H1 (cell line): ENCODE measurements at regions of chr12 and their contacts with region 1.

Region 1: DNA sequence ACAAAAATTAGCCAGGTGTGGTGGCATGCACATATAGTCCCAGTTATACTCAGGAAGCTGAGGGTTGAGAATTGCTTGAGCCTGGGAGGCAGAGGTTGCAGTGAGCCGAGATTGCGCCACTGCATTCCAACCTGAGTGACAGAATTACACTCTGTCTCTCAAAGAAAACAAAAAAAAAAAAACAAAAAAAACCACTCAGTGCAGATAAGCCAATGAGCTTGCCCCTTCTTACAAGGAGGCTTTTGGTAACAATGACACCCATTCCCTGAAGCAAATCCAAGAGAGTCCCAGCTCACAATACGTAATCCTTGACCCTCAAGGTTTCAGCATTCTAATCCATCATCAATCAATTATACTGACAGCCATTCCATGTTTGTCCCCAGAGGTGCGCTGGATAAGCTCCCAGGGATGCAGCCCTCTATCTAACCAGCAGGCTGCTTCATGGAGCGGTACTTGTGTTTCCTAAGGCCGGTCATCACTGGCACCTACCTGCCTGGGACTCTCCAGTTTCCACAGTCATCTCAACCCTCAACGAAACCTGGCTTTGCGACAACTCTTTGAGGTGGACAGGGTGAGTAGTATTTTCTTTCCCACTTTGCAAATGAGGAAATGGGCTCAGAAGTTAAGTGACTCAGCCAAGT is 12.4 kb downstream of the GCN1 start:
- DNase-seq: no peak
- H3K4me3 ChIP-seq: no peak overlapping the region
- H3K27ac ChIP-seq: no peak overlapping the region
- H3K4me1 ChIP-seq: no peaks in the 10 kb centered on the region
- H3K27me3 ChIP-seq: no peaks in the 10 kb centered on the region
- CTCF ChIP-seq: no peak
- EP300 ChIP-seq: no peak
- POLR2A ChIP-seq: no peak
- RAD21 ChIP-seq: no peak

Region 2: GRCh38 chr12:120159509-120160237 is 22.4 kb before region 1 on chr12:
- CTCF ChIA-PET with region 1: no interaction called
- POLR2A ChIA-PET with region 1: interaction called, 358 read pairs
- DNase-seq: no peak
- H3K4me3 ChIP-seq: no peak overlapping the region
- H3K27ac ChIP-seq: no peak overlapping the region
- H3K4me1 ChIP-seq: no peaks in the 10 kb centered on the region
- H3K27me3 ChIP-seq: no peaks in the 10 kb centered on the region
- CTCF ChIP-seq: no peak
- EP300 ChIP-seq: no peak
- POLR2A ChIP-seq: no peak
- RAD21 ChIP-seq: no peak

Region 3: GRCh38 chr12:120167529-120168095 is 14.5 kb before region 1 on chr12:
- CTCF ChIA-PET with region 1: interaction called, 3 read pairs
- POLR2A ChIA-PET with region 1: interaction called, 358 read pairs
- DNase-seq: no peak
- H3K4me3 ChIP-seq: no peak overlapping the region
- H3K27ac ChIP-seq: no peak overlapping the region
- H3K4me1 ChIP-seq: no peaks in the 10 kb centered on the region
- H3K27me3 ChIP-seq: no peaks in the 10 kb centered on the region
- CTCF ChIP-seq: no peak
- EP300 ChIP-seq: no peak
- POLR2A ChIP-seq: no peak
- RAD21 ChIP-seq: no peak